Endothelial cell of umbilical vein (primary cell): ENCODE measurements at regions of chr7 and their contacts with region 1.

Region 1: GRCh38 chr7:113118074-113118959 is at the start of gene SMIM30:
- DNase-seq: peak; percentile 93
- H3K4me3 ChIP-seq: peak within 1 kb of the TSS; percentile 55 to 99 (median 97)
- H3K27ac ChIP-seq: peak within 1 kb of the TSS; percentile 67
- H3K4me1 ChIP-seq: peaks cover 12% of the 10 kb centered on the region
- H3K27me3 ChIP-seq: peaks cover 0 to 7% of the 10 kb centered on the region in 2 experiments
- CTCF ChIP-seq: no peak
- POLR2A ChIP-seq: peak; percentile 71
- total RNA-seq, gene SMIM30: 39.1 and 41.7 TPM in 2 replicates

Region 2: GRCh38 chr7:112789817-112790585 is 328.3 kb before region 1 on chr7 and contains the start of gene TMEM168:
- CTCF ChIA-PET with region 1: no interaction called
- POLR2A ChIA-PET with region 1: no interaction called
- dilution Hi-C with region 1: no loop called
- intact Hi-C with region 1: loop called (anchors 10 kb)
- DNase-seq: peak; percentile 87
- H3K4me3 ChIP-seq: peak within 1 kb of the TSS; percentile 84 to 87 (median 86)
- H3K27ac ChIP-seq: peak within 1 kb of the TSS; percentile 76
- H3K4me1 ChIP-seq: peaks cover 18% of the 10 kb centered on the region
- H3K27me3 ChIP-seq: no peaks in the 10 kb centered on the region
- CTCF ChIP-seq: no peak
- POLR2A ChIP-seq: peak; percentile 85
- total RNA-seq, gene TMEM168: 23.8 and 24.4 TPM in 2 replicates

Region 3: DNA sequence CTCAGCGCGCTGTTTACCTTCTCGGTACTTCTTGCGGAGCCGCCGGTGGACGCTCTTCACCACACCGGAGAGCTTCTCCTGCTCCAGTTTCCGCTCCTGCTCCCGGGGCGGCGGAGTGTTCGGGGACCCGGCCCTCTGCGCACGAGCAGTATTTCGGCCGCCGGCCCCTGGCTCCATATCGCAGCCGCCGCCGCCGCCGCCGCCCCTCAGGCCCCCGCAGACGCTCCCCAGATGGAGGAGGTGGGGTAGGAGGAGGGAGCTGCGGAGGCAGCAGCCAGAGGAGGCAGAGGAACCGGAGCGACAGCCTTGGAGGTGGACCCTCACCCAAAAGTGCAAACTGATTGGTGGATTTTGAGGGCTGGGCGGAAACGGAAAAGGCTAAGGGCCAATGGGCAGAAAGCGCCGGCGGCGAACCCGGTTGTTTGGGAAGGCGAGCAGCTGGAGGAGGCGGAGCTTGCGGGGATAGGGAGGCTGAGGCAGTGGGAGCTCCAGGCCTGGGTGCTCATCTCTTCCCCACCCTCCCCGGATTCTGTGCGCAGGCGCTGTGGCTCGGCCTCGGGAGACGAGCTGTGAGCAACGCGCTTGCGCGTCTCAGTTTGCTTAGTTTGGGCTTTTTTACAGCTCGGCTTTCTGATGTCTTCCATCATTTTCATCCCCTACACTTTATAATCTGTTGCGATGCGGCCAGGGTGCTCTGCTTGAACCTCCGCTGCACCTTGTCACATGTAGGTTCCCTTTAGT is 178.6 kb before region 1 on chr7:
- CTCF ChIA-PET with region 1: no interaction called
- POLR2A ChIA-PET with region 1: no interaction called
- dilution Hi-C with region 1: no loop called
- intact Hi-C with region 1: loop called (anchors 1 kb)
- DNase-seq: peak; percentile 100
- H3K4me3 ChIP-seq: peak overlapping the region; percentile 74 to 84 (median 74)
- H3K27ac ChIP-seq: peak overlapping the region; percentile 27
- H3K4me1 ChIP-seq: peaks cover 11% of the 10 kb centered on the region
- H3K27me3 ChIP-seq: peaks cover 0 to 3% of the 10 kb centered on the region in 2 experiments
- CTCF ChIP-seq: no peak
- POLR2A ChIP-seq: peak; percentile 75

Region 4: GRCh38 chr7:113026941-113027340 is 91.4 kb before region 1 on chr7:
- CTCF ChIA-PET with region 1: no interaction called
- POLR2A ChIA-PET with region 1: no interaction called
- dilution Hi-C with region 1: no loop called
- intact Hi-C with region 1: no loop called
- DNase-seq: no peak
- H3K4me3 ChIP-seq: no peak overlapping the region
- H3K27ac ChIP-seq: no peak overlapping the region
- H3K4me1 ChIP-seq: no peaks in the 10 kb centered on the region
- H3K27me3 ChIP-seq: no peaks in the 10 kb centered on the region
- CTCF ChIP-seq: no peak
- POLR2A ChIP-seq: no peak

Region 5: DNA sequence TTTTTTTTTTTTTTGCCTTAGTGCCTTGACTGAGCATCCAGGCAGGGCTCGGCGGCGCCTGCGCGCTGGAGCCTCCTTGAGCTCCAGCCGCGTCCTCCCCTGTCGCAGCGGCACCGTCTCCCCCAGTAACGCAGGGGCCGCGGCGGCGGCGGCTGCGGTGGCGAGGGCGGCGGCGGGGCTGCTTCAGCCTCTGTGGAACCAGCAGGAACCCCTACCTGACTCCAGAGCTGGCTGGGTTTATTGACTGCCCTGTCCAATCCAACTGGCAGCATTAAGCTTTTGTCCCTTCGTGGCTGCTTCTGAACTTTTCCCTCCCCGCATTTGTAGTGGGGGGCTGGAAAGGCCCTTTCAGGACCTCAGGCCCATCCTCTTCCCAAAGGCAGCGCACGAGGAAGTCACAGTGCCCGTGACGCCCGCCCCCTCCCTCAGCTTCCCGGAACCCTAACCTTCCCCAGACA is 31.9 kb before region 1 on chr7 and contains the start of gene GPR85:
- CTCF ChIA-PET with region 1: interaction called, 4 read pairs
- POLR2A ChIA-PET with region 1: no interaction called
- dilution Hi-C with region 1: no loop called
- intact Hi-C with region 1: loop called (anchors 2 kb)
- DNase-seq: peak; percentile 50
- H3K4me3 ChIP-seq: peak within 1 kb of the TSS; percentile 46 to 58 (median 52)
- H3K27ac ChIP-seq: peak within 1 kb of the TSS; percentile 37
- H3K4me1 ChIP-seq: peaks cover 6% of the 10 kb centered on the region
- H3K27me3 ChIP-seq: peaks cover 15 to 43% of the 10 kb centered on the region in 2 experiments
- CTCF ChIP-seq: no peak
- POLR2A ChIP-seq: no peak
- total RNA-seq, gene GPR85: 0.48 and 0.64 TPM in 2 replicates

Region 6: GRCh38 chr7:113561446-113561845 is 443.1 kb after region 1 on chr7:
- CTCF ChIA-PET with region 1: no interaction called
- POLR2A ChIA-PET with region 1: no interaction called
- dilution Hi-C with region 1: no loop called
- intact Hi-C with region 1: no loop called
- DNase-seq: no peak
- H3K4me3 ChIP-seq: no peak overlapping the region
- H3K27ac ChIP-seq: no peak overlapping the region
- H3K4me1 ChIP-seq: no peaks in the 10 kb centered on the region
- H3K27me3 ChIP-seq: no peaks in the 10 kb centered on the region
- CTCF ChIP-seq: no peak
- POLR2A ChIP-seq: no peak